Activated CD4-positive, alpha-beta T cell treated with anti-CD3 and anti-CD28 coated beads, Interleukin-2, amount 10 ng/mL, durations not matched to agents 24 days and 14 days (primary cell): ENCODE measurements at regions of chr11 and their contacts with region 1.

Region 1: DNA sequence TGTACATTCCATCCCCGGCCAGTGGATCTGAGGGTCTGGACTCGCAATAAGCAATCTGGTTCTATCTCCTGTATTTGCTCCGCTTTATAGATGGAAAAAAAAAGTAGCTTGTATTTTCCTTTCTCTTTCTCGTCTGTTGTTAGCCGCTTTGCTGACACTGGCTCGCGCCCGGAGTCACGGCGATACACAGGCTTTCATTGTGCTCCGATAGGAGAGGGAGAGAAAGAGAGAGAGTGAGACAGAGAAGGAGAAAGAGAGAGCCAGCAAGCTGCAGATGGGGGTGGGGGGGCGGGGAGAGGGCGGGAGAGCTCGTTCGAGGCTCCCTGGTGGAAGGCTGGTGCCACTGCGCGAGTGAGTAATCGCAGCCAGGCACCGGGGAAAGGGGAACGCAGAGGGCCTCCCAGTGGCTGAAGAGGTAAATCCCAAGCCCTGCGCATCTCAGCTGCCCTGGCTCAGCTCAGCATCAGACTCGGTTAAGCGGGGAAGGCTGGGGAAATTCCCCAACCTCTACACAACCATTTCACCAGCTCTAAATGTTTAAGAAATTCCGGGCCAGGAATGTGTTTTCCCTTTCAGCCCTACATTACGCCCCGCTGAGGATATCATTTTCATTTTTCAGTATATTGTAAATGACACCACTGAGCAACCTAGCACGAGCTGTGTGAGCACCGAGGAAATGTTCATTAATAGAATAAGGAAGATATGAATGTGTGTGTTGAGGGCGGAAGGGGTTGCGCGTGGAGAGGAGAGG is at the start of gene MAML2:
- DNase-seq: peak; percentile 96
- H3K4me3 Mint-ChIP-seq: peak within 1 kb of the TSS; percentile 95
- H3K27ac Mint-ChIP-seq: peak within 1 kb of the TSS; percentile 93
- H3K4me1 Mint-ChIP-seq: peaks cover 43% of the 10 kb centered on the region
- H3K27me3 Mint-ChIP-seq: no peaks in the 10 kb centered on the region
- total RNA-seq, gene MAML2: 11.9 and 12.4 TPM in 2 replicates

Region 2: GRCh38 chr11:95790123-95790932 is 552.8 kb before region 1 on chr11 and contains the start of gene CEP57:
- intact Hi-C with region 1: loop called (anchors 1 kb)
- DNase-seq: peak; percentile 98
- H3K4me3 Mint-ChIP-seq: peak within 1 kb of the TSS; percentile 98
- H3K27ac Mint-ChIP-seq: peak within 1 kb of the TSS; percentile 100
- H3K4me1 Mint-ChIP-seq: peaks cover 45% of the 10 kb centered on the region
- H3K27me3 Mint-ChIP-seq: no peaks in the 10 kb centered on the region
- total RNA-seq, gene CEP57: 75.7 and 87.6 TPM in 2 replicates

Region 3: DNA sequence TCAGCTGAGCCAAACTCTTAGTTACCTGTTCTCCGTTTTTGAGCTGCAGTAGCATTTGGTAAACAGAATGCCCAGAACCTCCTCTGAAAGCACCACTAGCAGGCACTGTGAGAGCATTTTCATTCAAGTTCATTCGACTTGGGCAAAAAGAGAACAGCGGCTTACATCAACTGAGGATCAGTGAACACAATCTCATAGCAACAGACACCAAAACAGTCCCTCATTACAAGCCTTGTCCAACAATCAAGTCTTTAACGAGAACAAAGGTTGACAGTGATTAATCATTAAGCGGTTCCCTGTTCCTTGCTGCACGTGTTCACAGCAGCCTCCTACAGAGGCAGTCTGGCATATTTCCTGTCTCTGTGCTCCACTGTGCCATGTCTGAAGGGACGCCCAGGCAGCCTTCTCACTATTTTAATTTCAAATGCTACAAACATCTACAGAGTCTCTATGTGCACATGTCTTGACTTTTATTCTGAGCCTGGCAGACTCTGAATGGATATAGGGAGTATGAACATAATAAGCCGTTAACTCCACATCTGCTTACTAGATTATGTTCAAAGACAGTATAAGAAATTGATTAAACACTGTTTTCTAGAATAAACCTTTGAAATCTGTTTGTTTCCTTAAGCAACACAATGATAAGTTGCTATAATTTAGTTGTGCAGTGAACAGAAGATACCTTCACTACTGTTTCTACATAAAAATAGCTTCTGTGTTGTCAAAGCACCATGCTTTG is 330.9 kb before region 1 on chr11:
- intact Hi-C with region 1: loop called (anchors 1 kb)
- DNase-seq: peak; percentile 82
- H3K4me3 Mint-ChIP-seq: peak overlapping the region; percentile 52
- H3K27ac Mint-ChIP-seq: peak overlapping the region; percentile 79
- H3K4me1 Mint-ChIP-seq: peaks cover 49% of the 10 kb centered on the region
- H3K27me3 Mint-ChIP-seq: no peaks in the 10 kb centered on the region

Region 4: DNA sequence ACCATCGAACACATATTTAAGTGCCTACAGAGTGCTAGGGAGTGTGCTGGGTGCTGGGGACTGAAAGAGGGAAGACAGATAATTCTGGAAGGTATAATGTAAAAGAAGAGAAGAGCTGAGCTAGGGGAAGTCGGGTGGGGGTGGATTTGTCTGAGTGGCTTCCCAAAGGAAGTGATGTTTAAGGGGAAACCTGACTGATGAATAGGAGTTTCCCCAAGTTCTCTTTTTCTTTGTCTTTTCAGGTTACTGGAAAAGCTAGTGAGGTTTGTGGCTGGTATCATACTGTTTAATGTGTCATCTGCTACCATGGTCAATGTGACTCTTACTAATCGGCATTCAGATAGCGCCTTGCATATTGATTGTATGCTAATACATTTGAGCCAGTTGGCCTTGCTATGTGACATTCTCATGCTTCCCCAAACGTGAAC is 267.6 kb before region 1 on chr11:
- intact Hi-C with region 1: loop called (anchors 5 kb)
- DNase-seq: no peak
- H3K4me3 Mint-ChIP-seq: peak overlapping the region; percentile 47
- H3K27ac Mint-ChIP-seq: peak overlapping the region; percentile 58
- H3K4me1 Mint-ChIP-seq: peaks cover 51% of the 10 kb centered on the region
- H3K27me3 Mint-ChIP-seq: no peaks in the 10 kb centered on the region

Region 5: GRCh38 chr11:96207459-96208449 is 135.4 kb before region 1 on chr11:
- intact Hi-C with region 1: loop called (anchors 2 kb)
- DNase-seq: peak; percentile 78
- H3K4me3 Mint-ChIP-seq: peak overlapping the region; percentile 74
- H3K27ac Mint-ChIP-seq: peak overlapping the region; percentile 93
- H3K4me1 Mint-ChIP-seq: peaks cover 71% of the 10 kb centered on the region
- H3K27me3 Mint-ChIP-seq: no peaks in the 10 kb centered on the region

Region 6: GRCh38 chr11:96254087-96254486 is 89.0 kb before region 1 on chr11:
- intact Hi-C with region 1: loop called (anchors 2 kb)
- DNase-seq: peak; percentile 83
- H3K4me3 Mint-ChIP-seq: peak overlapping the region; percentile 79
- H3K27ac Mint-ChIP-seq: peak overlapping the region; percentile 84
- H3K4me1 Mint-ChIP-seq: peaks cover 73% of the 10 kb centered on the region
- H3K27me3 Mint-ChIP-seq: no peaks in the 10 kb centered on the region

Region 7: DNA sequence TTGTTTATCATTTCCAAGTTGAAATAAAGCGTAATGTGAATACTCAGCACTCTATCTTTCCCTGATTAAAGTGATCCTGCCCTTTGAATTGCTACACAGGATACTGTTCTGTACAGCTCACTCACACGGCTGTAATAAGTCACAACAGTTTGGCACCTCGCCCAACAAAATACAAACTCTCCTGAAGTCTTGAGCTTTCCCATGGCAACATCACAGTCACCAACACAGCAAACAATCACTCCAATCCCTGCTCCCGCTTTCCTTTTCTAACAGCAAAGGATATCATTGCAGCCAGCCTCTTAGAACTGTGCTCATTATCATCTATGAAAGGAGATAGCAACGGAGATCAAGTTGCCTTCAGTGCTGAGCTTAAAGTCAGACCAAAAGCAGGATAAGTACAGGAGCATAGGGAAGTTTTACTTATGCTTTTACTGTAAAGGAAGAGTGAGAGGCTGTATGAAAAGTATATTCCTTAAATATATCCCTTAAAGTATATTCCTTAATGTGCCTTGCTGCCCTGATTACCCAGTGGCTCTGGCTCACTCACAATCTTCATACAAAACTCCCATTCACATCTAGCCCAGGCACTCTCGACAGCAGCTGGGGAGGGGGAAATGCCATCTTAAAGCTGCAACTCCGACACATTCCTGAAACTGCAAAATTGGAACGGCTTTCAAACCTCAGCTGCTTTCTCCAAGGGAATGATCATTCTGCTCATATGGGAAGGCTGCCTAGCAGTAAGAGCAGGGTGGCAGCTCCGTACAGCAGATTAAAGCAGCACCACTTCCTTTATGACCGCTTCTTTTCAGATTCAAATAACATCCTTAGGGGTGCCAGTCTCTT is 36.0 kb before region 1 on chr11:
- intact Hi-C with region 1: loop called (anchors 5 kb)
- DNase-seq: peak; percentile 62
- H3K4me3 Mint-ChIP-seq: peak overlapping the region; percentile 50
- H3K27ac Mint-ChIP-seq: peak overlapping the region; percentile 50
- H3K4me1 Mint-ChIP-seq: peaks cover 32% of the 10 kb centered on the region
- H3K27me3 Mint-ChIP-seq: no peaks in the 10 kb centered on the region